ENCODE measurements at regions of chr18 and their contacts with region 1.

Region 1: DNA sequence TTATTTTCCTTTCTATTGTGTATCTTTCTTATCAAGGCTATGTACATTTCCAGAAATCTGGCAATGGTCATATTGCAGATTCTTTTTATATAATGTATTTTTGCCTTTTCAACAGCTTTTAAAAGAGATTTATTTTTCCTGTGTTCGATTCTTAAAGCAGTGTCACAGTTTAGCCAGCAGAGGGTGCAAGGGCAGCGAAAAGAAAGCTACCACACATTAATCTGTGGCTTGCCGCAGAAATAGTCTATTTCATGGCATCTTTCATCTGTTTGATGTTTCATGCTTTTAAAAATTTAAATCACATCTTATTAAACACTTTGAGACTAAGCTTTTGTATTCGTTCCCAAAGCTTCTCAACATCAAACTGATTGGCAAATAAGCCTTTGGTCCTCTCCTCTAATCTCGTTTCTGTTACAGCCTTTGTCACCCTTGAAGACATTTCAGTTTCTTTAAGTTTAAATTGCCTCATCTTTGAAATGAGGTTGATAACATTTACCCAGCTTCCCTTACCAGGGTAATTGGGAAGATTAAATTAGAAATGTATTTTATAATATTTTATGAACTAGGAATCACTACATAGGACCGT is 73.3 kb downstream of the PIK3C3 start:
- DNase-seq: no peak
- ATAC-seq: 0 out of 3 replicates have a peak, but pooled peaks have one; percentile 22
- H3K4me3 ChIP-seq: no peak overlapping the region
- H3K27ac ChIP-seq: no peak overlapping the region
- H3K4me1 ChIP-seq: peaks cover 33% of the 10 kb centered on the region
- H3K27me3 ChIP-seq: no peaks in the 10 kb centered on the region
- CTCF ChIP-seq: peak; percentile 63 to 77 (median 74)
- EP300 ChIP-seq: no peak
- POLR2A ChIP-seq: no peak
- RAD21 ChIP-seq: peak; percentile 40; the same call in 1 of the 2 replicates

Region 2: GRCh38 chr18:40687399-40687798 is 1340.9 kb before region 1 on chr18:
- CTCF ChIA-PET with region 1: no interaction called
- POLR2A ChIA-PET with region 1: no interaction called
- RAD21 ChIA-PET with region 1: no interaction called
- SMC1A ChIA-PET with region 1: no interaction called
- in situ Hi-C with region 1: no loop called
- intact Hi-C with region 1: no loop called
- DNase-seq: no peak
- ATAC-seq: no peak
- H3K4me3 ChIP-seq: no peak overlapping the region
- H3K27ac ChIP-seq: no peak overlapping the region
- H3K4me1 ChIP-seq: no peaks in the 10 kb centered on the region
- H3K27me3 ChIP-seq: no peaks in the 10 kb centered on the region
- CTCF ChIP-seq: no peak
- EP300 ChIP-seq: no peak
- POLR2A ChIP-seq: no peak
- RAD21 ChIP-seq: no peak

Region 3: DNA sequence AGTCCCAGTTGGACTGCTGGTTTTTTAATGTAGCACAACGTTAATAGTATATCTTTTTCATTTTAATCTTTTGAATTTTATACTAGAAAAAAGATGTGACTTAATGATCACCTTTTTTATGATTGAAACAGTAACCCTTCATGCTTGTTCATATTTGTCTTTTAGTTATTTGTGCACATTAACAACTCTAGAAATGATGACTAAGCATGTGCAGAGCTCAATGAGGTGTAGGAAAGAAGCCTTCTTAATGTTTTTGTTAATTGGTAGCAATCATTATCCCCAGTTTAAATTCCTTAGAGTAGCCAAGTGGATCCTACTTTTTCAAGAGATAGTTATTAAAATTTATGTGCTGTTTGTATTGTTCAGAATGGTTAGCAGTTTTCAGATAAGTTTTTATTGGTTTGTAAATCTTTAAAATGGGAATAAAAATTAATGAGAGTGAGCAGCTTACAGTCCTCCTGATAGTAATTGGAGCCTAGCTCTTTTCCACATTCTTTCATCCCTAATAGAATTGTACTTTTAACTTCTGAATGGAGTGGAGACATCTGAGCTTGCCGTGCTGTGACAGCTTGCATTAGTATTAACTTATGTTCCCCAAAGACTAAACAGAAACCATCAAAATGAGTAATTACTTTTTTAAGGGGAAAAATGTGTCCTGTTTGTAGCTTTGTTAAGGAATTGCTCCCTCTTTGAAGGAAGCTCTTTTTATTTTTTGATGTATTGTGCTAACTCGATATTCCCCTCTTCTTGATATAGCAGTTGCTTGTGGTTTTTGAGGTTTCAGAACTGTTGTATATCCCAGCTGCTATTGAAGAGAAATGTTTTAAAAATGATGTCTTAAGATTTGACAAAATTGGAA is 56.0 kb before region 1 on chr18:
- CTCF ChIA-PET with region 1: interaction called, 17 read pairs
- POLR2A ChIA-PET with region 1: no interaction called
- RAD21 ChIA-PET with region 1: no interaction called
- SMC1A ChIA-PET with region 1: interaction called, 6 read pairs
- in situ Hi-C with region 1: no loop called
- intact Hi-C with region 1: no loop called
- DNase-seq: no peak
- ATAC-seq: peak; percentile 48
- H3K4me3 ChIP-seq: no peak overlapping the region; the same call in 1 of the 2 replicates
- H3K27ac ChIP-seq: peak overlapping the region; percentile 24; the same call in 1 of the 2 replicates
- H3K4me1 ChIP-seq: peaks cover 10% of the 10 kb centered on the region
- H3K27me3 ChIP-seq: no peaks in the 10 kb centered on the region
- CTCF ChIP-seq: no peak
- EP300 ChIP-seq: no peak
- POLR2A ChIP-seq: no peak
- RAD21 ChIP-seq: no peak

Region 4: DNA sequence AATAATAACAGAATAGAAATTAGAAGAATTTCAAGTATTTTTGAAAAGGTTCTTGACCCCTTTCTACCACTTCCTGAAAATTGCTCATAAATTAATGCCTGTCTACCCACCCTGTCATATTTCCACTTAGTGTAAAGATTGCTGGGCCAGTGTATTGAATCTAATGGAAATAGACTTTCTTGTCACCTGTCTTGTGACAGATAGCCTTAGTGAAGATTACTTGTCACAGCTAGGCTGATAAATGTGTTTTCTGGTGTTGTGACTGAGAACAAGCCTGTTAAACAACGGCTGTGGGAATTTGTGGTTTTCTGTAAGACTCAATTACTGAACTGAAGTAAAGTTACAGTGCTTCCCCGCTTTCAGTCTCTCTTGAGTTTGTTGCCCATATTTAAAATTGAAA is 36.3 kb before region 1 on chr18:
- CTCF ChIA-PET with region 1: interaction called, 20 read pairs
- POLR2A ChIA-PET with region 1: interaction called, 3 read pairs
- RAD21 ChIA-PET with region 1: interaction called, 6 read pairs
- SMC1A ChIA-PET with region 1: interaction called, 15 read pairs
- in situ Hi-C with region 1: no loop called
- intact Hi-C with region 1: loop called (anchors 1 kb)
- DNase-seq: peak; percentile 76
- ATAC-seq: peak; percentile 92
- H3K4me3 ChIP-seq: no peak overlapping the region
- H3K27ac ChIP-seq: peak overlapping the region; percentile 67; the same call in 1 of the 2 replicates
- H3K4me1 ChIP-seq: peaks cover 4% of the 10 kb centered on the region; the same call in 1 of the 2 replicates
- H3K27me3 ChIP-seq: no peaks in the 10 kb centered on the region
- CTCF ChIP-seq: no peak
- EP300 ChIP-seq: peak; percentile 87 to 97
- POLR2A ChIP-seq: no peak
- RAD21 ChIP-seq: no peak

Region 5: DNA sequence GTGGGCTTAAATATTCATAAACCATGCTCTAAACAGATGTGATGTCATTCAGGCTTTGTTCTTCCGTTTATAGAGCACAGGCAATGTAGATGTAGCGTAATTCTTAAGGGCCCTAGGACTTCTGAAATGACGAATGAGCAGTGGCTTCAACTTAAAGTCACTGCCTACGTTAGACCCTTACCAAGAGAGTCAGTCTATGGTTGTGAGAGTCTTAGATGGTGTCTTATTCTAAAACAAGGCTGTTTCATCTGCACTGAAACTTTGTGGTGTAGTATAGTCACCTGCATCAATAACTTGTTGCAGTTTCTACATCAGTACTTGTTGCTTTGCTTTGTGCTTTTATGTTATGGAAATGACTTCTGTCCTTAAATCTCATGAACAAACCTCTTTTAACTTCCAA is 17.3 kb before region 1 on chr18:
- CTCF ChIA-PET with region 1: interaction called, 47 read pairs
- POLR2A ChIA-PET with region 1: no interaction called
- RAD21 ChIA-PET with region 1: no interaction called
- SMC1A ChIA-PET with region 1: interaction called, 9 read pairs
- in situ Hi-C with region 1: no loop called
- intact Hi-C with region 1: loop called (anchors 1 kb)
- DNase-seq: peak; percentile 50
- ATAC-seq: peak; percentile 99
- H3K4me3 ChIP-seq: no peak overlapping the region
- H3K27ac ChIP-seq: peak overlapping the region; percentile 69
- H3K4me1 ChIP-seq: peaks cover 17% of the 10 kb centered on the region
- H3K27me3 ChIP-seq: no peaks in the 10 kb centered on the region
- CTCF ChIP-seq: no peak
- EP300 ChIP-seq: 0 out of 4 replicates have a peak, but pooled peaks of 1 of the 2 experiments have one; percentile 10
- POLR2A ChIP-seq: no peak
- RAD21 ChIP-seq: no peak

Region 6: DNA sequence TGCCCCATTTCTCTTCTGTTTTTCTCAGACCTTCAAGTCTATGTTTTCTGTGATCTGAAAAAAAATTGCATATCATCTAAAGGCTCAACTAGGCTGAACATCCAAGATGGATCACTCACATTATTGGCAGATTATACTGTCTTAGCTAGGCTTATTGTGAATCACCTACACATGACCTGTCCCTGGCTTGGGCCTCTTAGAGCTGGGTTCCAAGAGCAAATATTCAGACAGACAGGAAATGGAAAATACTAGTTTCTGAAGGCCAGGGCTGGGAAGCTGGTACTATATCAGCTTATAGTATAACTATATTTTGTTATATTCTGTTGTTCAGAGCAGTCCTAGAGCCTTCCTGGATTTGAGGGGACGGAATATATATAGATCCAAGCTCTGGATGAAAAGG is 17.0 kb after region 1 on chr18:
- CTCF ChIA-PET with region 1: interaction called, 98 read pairs
- POLR2A ChIA-PET with region 1: no interaction called
- RAD21 ChIA-PET with region 1: interaction called, 3 read pairs
- SMC1A ChIA-PET with region 1: interaction called, 6 read pairs
- in situ Hi-C with region 1: no loop called
- intact Hi-C with region 1: no loop called
- DNase-seq: no peak
- ATAC-seq: no peak
- H3K4me3 ChIP-seq: no peak overlapping the region
- H3K27ac ChIP-seq: no peak overlapping the region
- H3K4me1 ChIP-seq: no peaks in the 10 kb centered on the region
- H3K27me3 ChIP-seq: no peaks in the 10 kb centered on the region
- CTCF ChIP-seq: no peak
- EP300 ChIP-seq: no peak
- POLR2A ChIP-seq: no peak
- RAD21 ChIP-seq: no peak

Measured in GM12878 (cell line).